Naive thymus-derived CD4-positive, alpha-beta T cell (primary cell): ENCODE measurements at regions of chr14 and their contacts with region 1.

Region 1: GRCh38 chr14:89635615-89636014 is 218.6 kb upstream of the FOXN3 start:
- DNase-seq: no peak
- ATAC-seq: no peak
- H3K4me3 ChIP-seq: no peak overlapping the region
- H3K4me3 Mint-ChIP-seq: no peak overlapping the region
- H3K27ac ChIP-seq: no peak overlapping the region
- H3K27ac Mint-ChIP-seq: peak overlapping the region in 1 of 9 donors; percentile 29
- H3K4me1 ChIP-seq: peaks cover 0 to 38% of the 10 kb centered on the region in 2 donors
- H3K4me1 Mint-ChIP-seq: peaks cover 23 to 72% (median 52%) of the 10 kb centered on the region in 7 donors
- H3K27me3 ChIP-seq: no peaks in the 10 kb centered on the region
- H3K27me3 Mint-ChIP-seq: no peaks in the 10 kb centered on the region

Region 2: DNA sequence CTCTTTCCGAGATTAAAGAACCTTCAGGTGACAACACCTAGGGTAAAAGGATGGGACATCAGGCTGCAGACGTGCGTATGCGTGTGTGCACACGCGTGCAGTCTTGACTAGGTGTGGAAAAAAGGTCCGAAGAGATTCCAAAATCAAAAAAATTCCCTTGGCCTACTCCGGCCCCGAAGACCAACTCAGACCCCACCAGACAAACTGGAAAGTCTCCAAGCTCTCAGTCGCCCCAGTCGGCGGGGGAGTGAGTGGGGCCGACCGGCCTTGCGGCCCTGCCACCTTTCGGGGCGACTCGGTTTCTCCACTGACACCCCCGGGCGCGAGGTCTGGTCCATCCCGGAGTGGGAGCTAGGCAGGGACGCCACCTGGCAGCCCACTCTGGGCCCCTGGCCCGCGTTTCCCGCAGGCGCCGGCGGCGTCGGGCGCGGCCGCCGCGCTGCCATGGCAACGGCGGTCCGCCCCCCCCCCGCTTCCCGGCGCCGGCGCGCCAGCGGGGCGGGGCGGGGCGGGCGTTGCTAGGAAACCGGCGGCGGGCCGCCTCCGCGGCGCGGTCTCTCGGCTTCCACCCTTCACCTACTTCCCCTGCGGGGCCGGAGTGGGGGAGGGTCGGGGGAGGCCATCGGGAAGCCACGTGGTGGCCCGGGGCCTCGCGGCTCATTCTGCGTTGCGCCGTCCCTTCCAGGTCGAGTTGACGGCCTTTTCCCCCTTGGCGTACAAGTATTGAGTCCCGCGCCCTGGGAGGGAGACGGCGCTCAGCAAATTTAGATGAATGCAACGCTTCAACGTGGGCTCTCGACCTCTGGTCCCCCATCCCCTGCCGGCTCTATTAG is 65.8 kb after region 1 on chr14:
- CTCF ChIA-PET with region 1: no interaction called
- POLR2A ChIA-PET with region 1: interaction called, 4 read pairs
- intact Hi-C with region 1: loop called in 1 of 2 experiments (anchors 5 kb)
- DNase-seq: peak; percentile 67 to 88 (median 80)
- ATAC-seq: peak; percentile 95
- H3K4me3 ChIP-seq: peak overlapping the region; percentile 76
- H3K4me3 Mint-ChIP-seq: peak overlapping the region; percentile 73 to 93 (median 88)
- H3K27ac ChIP-seq: peak overlapping the region; percentile 69
- H3K27ac Mint-ChIP-seq: peak overlapping the region; percentile 75 to 98 (median 89)
- H3K4me1 ChIP-seq: peaks cover 12 to 23% of the 10 kb centered on the region in 2 donors
- H3K4me1 Mint-ChIP-seq: peaks cover 16 to 73% (median 59%) of the 10 kb centered on the region in 7 donors
- H3K27me3 ChIP-seq: no peaks in the 10 kb centered on the region
- H3K27me3 Mint-ChIP-seq: no peaks in the 10 kb centered on the region